PC-9 (cell line): ENCODE measurements at regions of chr15 and their contacts with region 1.

Region 1: DNA sequence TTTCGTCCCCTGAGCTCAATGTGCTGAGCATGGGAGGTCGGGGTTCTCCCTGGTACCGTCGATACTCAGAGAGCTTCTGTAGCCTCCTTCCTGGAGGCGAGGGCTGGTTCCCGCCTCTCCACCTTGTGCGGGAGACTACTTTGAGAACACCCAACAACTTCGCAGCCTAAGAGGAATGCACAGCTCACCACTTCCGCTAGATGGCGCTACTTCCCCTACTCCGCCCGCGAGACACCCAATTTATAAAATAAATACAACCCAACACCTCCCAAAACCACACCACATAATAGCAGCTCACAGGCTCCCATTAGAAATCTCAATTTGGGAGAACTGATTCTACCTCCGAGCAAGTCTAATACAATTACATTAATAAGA is 1.2 kb downstream of the RGMA start:
- DNase-seq: peak in 1 of 2 experiments; percentile 47
- H3K4me3 ChIP-seq: no peak overlapping the region
- H3K27ac ChIP-seq: no peak overlapping the region
- H3K4me1 ChIP-seq: no peaks in the 10 kb centered on the region
- H3K27me3 ChIP-seq: peaks cover 58% of the 10 kb centered on the region
- CTCF ChIP-seq: peak; percentile 84

Region 2: DNA sequence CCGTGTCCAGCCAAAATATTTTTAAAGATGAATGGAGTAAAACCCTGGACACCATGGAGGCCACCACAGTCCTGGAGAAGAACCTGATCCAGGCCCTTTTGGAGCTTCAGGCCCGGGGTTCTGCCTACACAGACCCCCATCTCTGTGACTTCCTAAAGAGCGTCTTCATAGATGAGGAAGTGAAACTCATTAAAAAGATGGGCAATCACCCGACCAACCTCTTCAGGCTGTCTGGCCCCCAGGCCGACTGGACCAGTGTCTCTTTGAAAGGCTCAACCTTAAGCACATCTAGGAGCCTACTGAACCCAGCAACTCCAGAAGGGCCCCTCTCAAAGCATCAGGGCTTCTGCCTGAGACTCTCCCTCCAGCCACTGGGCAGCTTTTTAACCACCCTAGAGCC is 324.4 kb before region 1 on chr15:
- CTCF ChIA-PET with region 1: no interaction called
- POLR2A ChIA-PET with region 1: no interaction called
- intact Hi-C with region 1: no loop called
- DNase-seq: no peak
- H3K4me3 ChIP-seq: no peak overlapping the region
- H3K27ac ChIP-seq: no peak overlapping the region
- H3K4me1 ChIP-seq: no peaks in the 10 kb centered on the region
- H3K27me3 ChIP-seq: no peaks in the 10 kb centered on the region
- CTCF ChIP-seq: no peak

Region 3: GRCh38 chr15:93005133-93005532 is 82.7 kb before region 1 on chr15:
- CTCF ChIA-PET with region 1: no interaction called
- POLR2A ChIA-PET with region 1: no interaction called
- intact Hi-C with region 1: no loop called
- DNase-seq: no peak
- H3K4me3 ChIP-seq: no peak overlapping the region
- H3K27ac ChIP-seq: no peak overlapping the region
- H3K4me1 ChIP-seq: no peaks in the 10 kb centered on the region
- H3K27me3 ChIP-seq: no peaks in the 10 kb centered on the region
- CTCF ChIP-seq: no peak

Region 4: DNA sequence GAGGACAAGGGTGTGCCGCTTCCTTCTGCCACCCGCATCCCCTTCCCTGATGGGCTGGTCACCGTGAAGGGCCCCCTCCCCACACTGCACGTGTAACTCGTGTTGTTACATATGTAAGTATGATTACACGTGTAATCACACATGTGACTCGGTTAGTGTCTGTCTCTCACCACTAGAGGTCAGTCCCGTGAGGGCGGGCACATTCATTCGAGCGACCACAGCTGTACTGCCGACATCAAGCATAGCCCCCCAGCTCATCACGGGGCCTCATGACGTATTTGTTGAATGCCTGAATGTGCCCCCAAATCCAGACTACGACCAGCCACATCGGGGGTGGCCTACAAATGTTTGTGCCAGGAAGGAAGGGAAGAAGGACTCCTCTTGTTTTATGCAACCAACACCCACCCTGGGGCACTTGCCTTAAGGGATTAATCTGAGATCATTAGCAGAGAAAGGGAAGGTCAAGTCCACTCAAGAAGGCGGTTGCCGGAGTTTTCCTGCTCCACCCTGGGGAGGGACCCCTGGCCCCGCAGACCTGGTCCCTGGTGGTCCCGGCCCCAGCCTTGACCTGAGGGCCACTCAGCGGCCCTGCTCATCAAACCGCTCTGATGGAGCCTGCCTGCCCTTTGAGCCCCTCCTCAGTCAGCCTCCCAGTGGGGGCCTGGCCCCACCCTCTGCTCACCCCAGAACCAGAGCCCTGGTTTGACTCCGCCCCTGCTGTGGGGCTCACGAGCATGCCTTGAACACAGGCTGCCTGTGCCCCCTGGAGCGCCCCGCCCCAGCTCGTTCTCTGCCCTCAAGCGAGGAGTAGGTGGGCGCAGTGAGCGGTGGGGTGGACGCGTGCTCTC is 51.6 kb before region 1 on chr15:
- CTCF ChIA-PET with region 1: no interaction called
- POLR2A ChIA-PET with region 1: no interaction called
- intact Hi-C with region 1: loop called (anchors 5 kb)
- DNase-seq: no peak
- H3K4me3 ChIP-seq: no peak overlapping the region
- H3K27ac ChIP-seq: no peak overlapping the region
- H3K4me1 ChIP-seq: no peaks in the 10 kb centered on the region
- H3K27me3 ChIP-seq: no peaks in the 10 kb centered on the region
- CTCF ChIP-seq: peak; percentile 66

Region 5: GRCh38 chr15:94119923-94120775 is 1032.3 kb after region 1 on chr15:
- CTCF ChIA-PET with region 1: no interaction called
- POLR2A ChIA-PET with region 1: no interaction called
- intact Hi-C with region 1: loop called (anchors 5 kb)
- DNase-seq: peak; percentile 35 to 46
- H3K4me3 ChIP-seq: no peak overlapping the region
- H3K27ac ChIP-seq: no peak overlapping the region
- H3K4me1 ChIP-seq: no peaks in the 10 kb centered on the region
- H3K27me3 ChIP-seq: no peaks in the 10 kb centered on the region
- CTCF ChIP-seq: peak; percentile 81